ENCODE measurements at regions of chr12 and their contacts with region 1.

Region 1: DNA sequence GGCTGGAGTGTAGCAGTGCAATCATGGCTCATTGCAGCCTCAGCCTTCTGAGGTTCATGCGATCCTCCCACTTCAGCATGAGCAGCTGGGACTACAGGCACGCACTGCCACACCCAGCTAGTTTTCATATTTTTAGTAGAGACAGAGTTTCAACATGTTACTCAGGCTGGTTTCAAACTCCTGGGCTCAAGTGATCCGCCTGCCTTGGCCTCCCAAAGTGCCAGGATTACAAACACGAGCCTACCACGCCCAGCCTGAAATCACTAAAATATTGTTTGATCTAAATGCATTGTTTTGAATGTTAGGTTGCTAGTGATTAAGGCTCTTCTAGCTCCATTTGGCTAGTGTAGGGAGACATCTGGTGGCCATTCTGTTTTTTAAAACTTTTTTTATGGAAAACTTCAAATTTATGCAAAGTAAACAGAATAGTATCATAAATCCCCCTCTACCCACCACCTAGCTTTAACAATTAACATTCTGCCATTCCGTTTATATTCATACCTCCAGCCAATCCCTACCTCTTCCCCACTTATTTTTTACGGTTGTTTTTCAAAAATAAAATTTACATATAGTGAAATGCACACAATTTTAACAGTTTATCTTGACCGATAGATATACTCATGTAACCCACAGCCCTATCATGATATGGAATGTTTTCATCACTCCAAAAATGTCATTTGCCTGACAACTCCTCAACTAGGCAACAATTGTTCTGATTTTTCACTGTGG is 37.8 kb downstream of the MYO1H start:
- DNase-seq: peak; percentile 44

Region 2: DNA sequence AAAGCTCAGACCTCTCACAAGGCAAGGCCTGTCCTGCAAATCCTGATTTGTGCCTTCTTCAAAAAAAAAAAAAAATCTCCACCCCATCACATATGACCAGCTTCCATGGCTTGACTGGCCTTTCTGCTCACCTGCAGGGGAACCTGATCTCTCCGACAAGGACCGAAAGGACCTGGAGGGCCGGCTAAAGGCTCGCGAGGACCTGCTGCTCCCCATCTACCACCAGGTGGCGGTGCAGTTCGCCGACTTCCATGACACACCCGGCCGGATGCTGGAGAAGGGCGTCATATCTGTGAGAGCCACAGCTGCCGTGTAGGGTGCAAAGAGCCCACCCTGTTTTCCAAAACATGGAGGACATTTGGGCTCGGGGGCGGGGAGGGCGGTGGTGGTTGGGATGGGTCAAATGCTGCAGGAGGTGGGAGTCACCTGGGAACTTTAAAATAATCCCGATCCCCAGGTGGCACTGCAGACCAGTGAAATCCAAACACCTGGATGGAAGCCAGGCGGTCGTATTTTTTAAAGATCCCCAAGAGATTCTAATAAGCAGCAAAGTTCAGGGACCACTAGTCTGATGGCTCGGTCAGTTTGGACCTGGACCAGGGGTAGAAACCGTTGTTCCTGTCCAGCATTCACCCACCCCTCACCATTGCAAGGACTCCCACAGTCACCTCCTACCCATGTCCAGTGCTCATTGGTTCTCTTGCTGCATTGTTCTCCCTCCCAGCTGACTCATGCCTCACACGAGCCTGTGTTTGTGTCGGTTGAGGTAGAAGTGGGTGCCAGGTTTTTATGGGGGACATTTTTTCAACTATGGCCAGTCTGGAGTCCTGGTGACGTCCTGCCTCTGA is 121.2 kb before region 1 on chr12:
- CTCF ChIA-PET with region 1: interaction called, 14 read pairs
- POLR2A ChIA-PET with region 1: no interaction called
- DNase-seq: peak; percentile 89

Region 3: GRCh38 chr12:109369831-109370230 is 15.7 kb before region 1 on chr12:
- CTCF ChIA-PET with region 1: interaction called, 13 read pairs
- POLR2A ChIA-PET with region 1: no interaction called
- DNase-seq: no peak